ENCODE measurements at regions of chr12 and their contacts with region 1.

Region 1: GRCh38 chr12:57632694-57633477 is at the start of gene B4GALNT1:
- DNase-seq: peak; percentile 82
- ATAC-seq: peak; percentile 97
- H3K4me3 ChIP-seq: peak within 1 kb of the TSS in 4 of 5 experiments; percentile 40 to 75 (median 56)
- H3K4me3 Mint-ChIP-seq: peak within 1 kb of the TSS; percentile 77
- H3K27ac ChIP-seq: no peak within 1 kb of the TSS
- H3K27ac Mint-ChIP-seq: no peak within 1 kb of the TSS
- H3K4me1 ChIP-seq: peaks cover 20 to 24% of the 10 kb centered on the region in 2 donors
- H3K4me1 Mint-ChIP-seq: peaks cover 19% of the 10 kb centered on the region
- H3K27me3 ChIP-seq: peaks cover 0 to 69% (median 43%) of the 10 kb centered on the region in 4 experiments
- H3K27me3 Mint-ChIP-seq: peaks cover 52% of the 10 kb centered on the region
- CTCF ChIP-seq: peak; percentile 98
- total RNA-seq, gene B4GALNT1: 0.22 TPM in 1 of 2 replicates, not detected in the other

Region 2: GRCh38 chr12:57541001-57541400 is 91.9 kb before region 1 on chr12:
- CTCF ChIA-PET with region 1: no interaction called
- POLR2A ChIA-PET with region 1: no interaction called
- intact Hi-C with region 1: no loop called
- DNase-seq: no peak
- ATAC-seq: no peak
- H3K4me3 ChIP-seq: no peak overlapping the region
- H3K4me3 Mint-ChIP-seq: no peak overlapping the region
- H3K27ac ChIP-seq: no peak overlapping the region
- H3K27ac Mint-ChIP-seq: no peak overlapping the region
- H3K4me1 ChIP-seq: peaks cover 2 to 5% of the 10 kb centered on the region in 2 donors
- H3K4me1 Mint-ChIP-seq: peaks cover 20% of the 10 kb centered on the region
- H3K27me3 ChIP-seq: no peaks in the 10 kb centered on the region
- H3K27me3 Mint-ChIP-seq: no peaks in the 10 kb centered on the region
- CTCF ChIP-seq: no peak

Region 3: DNA sequence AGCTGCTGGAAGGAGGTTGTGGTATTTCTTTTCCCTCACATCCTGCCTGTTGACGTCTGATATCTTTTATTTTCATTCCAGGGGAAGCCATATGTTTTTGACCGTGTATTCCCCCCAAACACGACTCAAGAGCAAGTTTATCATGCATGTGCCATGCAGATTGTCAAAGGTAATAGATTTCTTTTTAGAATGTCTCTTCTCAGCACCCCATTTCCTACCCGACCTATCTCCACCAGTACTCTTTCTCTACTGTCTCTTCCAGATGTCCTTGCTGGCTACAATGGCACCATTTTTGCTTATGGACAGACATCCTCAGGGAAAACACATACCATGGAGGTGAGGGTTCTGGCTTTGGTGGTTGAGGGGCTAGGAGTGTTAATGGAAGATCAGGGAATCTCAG is 69.5 kb before region 1 on chr12:
- CTCF ChIA-PET with region 1: no interaction called
- POLR2A ChIA-PET with region 1: no interaction called
- intact Hi-C with region 1: no loop called
- DNase-seq: no peak
- ATAC-seq: no peak
- H3K4me3 ChIP-seq: no peak overlapping the region
- H3K4me3 Mint-ChIP-seq: no peak overlapping the region
- H3K27ac ChIP-seq: no peak overlapping the region
- H3K27ac Mint-ChIP-seq: no peak overlapping the region
- H3K4me1 ChIP-seq: no peaks in the 10 kb centered on the region
- H3K4me1 Mint-ChIP-seq: no peaks in the 10 kb centered on the region
- H3K27me3 ChIP-seq: peaks cover 0 to 15% (median 2%) of the 10 kb centered on the region in 4 experiments
- H3K27me3 Mint-ChIP-seq: peaks cover 31% of the 10 kb centered on the region
- CTCF ChIP-seq: no peak

Region 4: GRCh38 chr12:57611108-57611809 is 21.6 kb before region 1 on chr12 and contains the start of gene ARHGEF25:
- CTCF ChIA-PET with region 1: interaction called, 9 read pairs
- POLR2A ChIA-PET with region 1: no interaction called
- intact Hi-C with region 1: loop called (anchors 2 kb)
- DNase-seq: no peak
- ATAC-seq: peak; percentile 26
- H3K4me3 ChIP-seq: peak within 1 kb of the TSS in 4 of 5 experiments; percentile 34 to 62 (median 50)
- H3K4me3 Mint-ChIP-seq: peak within 1 kb of the TSS; percentile 81
- H3K27ac ChIP-seq: no peak within 1 kb of the TSS
- H3K27ac Mint-ChIP-seq: no peak within 1 kb of the TSS
- H3K4me1 ChIP-seq: peaks cover 52 to 59% of the 10 kb centered on the region in 2 donors
- H3K4me1 Mint-ChIP-seq: peaks cover 53% of the 10 kb centered on the region
- H3K27me3 ChIP-seq: peaks cover 0 to 71% (median 33%) of the 10 kb centered on the region in 4 experiments
- H3K27me3 Mint-ChIP-seq: peaks cover 45% of the 10 kb centered on the region
- CTCF ChIP-seq: no peak
- total RNA-seq, gene ARHGEF25: 0.15 TPM in 1 of 2 replicates, not detected in the other

Region 5: GRCh38 chr12:57657744-57658143 is 24.9 kb after region 1 on chr12:
- CTCF ChIA-PET with region 1: no interaction called
- POLR2A ChIA-PET with region 1: no interaction called
- intact Hi-C with region 1: no loop called
- DNase-seq: no peak
- ATAC-seq: no peak
- H3K4me3 ChIP-seq: no peak overlapping the region
- H3K4me3 Mint-ChIP-seq: no peak overlapping the region
- H3K27ac ChIP-seq: no peak overlapping the region
- H3K27ac Mint-ChIP-seq: no peak overlapping the region
- H3K4me1 ChIP-seq: no peaks in the 10 kb centered on the region
- H3K4me1 Mint-ChIP-seq: no peaks in the 10 kb centered on the region
- H3K27me3 ChIP-seq: peaks cover 0 to 5% (median 2%) of the 10 kb centered on the region in 4 experiments
- H3K27me3 Mint-ChIP-seq: peaks cover 26% of the 10 kb centered on the region
- CTCF ChIP-seq: no peak

Region 6: DNA sequence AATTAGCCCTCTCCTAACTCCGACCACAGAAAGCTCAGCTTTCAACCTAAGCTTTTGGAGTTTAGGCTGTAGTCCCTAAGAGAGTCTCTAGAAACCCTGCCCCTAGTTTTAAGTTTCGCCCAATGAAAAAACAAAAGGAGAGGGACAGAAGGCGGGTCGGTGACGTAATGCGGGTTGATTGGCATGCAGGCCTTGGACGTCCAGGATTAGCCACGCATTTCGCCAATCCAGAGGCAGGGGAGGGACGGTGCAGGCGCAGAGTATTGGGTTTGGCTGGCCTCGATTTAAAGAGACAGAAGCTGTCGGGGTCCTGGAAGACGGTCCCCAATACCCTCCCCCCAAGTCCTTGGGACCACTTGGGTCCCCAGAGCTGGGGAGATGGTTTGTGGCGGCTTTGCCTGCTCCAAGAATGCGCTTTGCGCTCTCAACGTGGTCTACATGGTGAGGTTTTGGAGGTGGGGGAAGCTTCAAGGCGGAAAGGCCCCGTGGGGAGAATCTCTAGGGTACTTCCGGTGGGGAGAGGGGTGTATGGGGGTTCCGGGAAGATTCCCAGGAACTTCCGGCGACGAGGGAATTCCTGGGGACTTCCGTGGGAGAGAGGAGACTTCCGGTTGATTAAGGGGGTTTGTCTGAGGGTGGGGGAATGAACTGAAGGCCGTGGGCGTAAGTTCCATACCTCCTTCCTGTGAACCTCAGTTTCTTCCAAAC is 112.0 kb after region 1 on chr12 and contains the start of gene TSPAN31:
- CTCF ChIA-PET with region 1: interaction called, 4 read pairs
- POLR2A ChIA-PET with region 1: no interaction called
- intact Hi-C with region 1: loop called (anchors 5 kb)
- DNase-seq: peak; percentile 97
- ATAC-seq: peak; percentile 86
- H3K4me3 ChIP-seq: peak within 1 kb of the TSS; percentile 68 to 90 (median 86)
- H3K4me3 Mint-ChIP-seq: peak within 1 kb of the TSS; percentile 92
- H3K27ac ChIP-seq: peak within 1 kb of the TSS; percentile 80 to 94
- H3K27ac Mint-ChIP-seq: peak within 1 kb of the TSS; percentile 91
- H3K4me1 ChIP-seq: peaks cover 33 to 52% of the 10 kb centered on the region in 2 donors
- H3K4me1 Mint-ChIP-seq: peaks cover 44% of the 10 kb centered on the region
- H3K27me3 ChIP-seq: no peaks in the 10 kb centered on the region
- H3K27me3 Mint-ChIP-seq: no peaks in the 10 kb centered on the region
- CTCF ChIP-seq: no peak
- total RNA-seq, gene TSPAN31: 29.6 and 33.5 TPM in 2 replicates